A673 (cell line): ENCODE measurements at regions of chr10 and their contacts with region 1.

Region 1: GRCh38 chr10:13776861-13777311 is 190.1 kb downstream of the PRPF18 start:
- DNase-seq: peak; percentile 72
- H3K4me3 ChIP-seq: no peak overlapping the region
- H3K27ac ChIP-seq: no peak overlapping the region
- H3K4me1 ChIP-seq: peaks cover 5% of the 10 kb centered on the region
- H3K27me3 ChIP-seq: no peaks in the 10 kb centered on the region
- CTCF ChIP-seq: no peak

Region 2: DNA sequence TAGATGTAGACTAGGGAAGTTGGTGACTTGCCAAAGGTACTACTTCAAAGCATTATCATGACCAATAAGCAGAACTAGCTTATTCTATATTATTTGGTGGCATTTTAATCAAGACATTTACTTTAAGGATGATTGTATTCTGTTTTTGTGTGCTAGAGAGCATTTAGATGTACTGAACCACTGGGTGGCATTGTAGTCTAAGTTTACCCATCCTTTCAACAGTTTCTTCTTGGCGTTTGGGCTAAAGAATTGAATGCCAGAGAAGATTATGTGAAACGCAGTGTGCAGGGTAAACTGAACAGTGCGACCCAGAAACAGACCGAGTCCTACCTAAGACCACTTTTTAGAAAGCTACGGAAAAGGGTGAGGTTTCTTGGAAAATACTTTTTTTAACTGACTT is 163.4 kb before region 1 on chr10:
- CTCF ChIA-PET with region 1: no interaction called
- POLR2A ChIA-PET with region 1: no interaction called
- intact Hi-C with region 1: loop called (anchors 1 kb)
- DNase-seq: peak; percentile 63
- H3K4me3 ChIP-seq: no peak overlapping the region
- H3K27ac ChIP-seq: no peak overlapping the region
- H3K4me1 ChIP-seq: peaks cover 40% of the 10 kb centered on the region
- H3K27me3 ChIP-seq: no peaks in the 10 kb centered on the region
- CTCF ChIP-seq: peak; percentile 56